ENCODE measurements at regions of chr19 and their contacts with region 1.

Region 1: DNA sequence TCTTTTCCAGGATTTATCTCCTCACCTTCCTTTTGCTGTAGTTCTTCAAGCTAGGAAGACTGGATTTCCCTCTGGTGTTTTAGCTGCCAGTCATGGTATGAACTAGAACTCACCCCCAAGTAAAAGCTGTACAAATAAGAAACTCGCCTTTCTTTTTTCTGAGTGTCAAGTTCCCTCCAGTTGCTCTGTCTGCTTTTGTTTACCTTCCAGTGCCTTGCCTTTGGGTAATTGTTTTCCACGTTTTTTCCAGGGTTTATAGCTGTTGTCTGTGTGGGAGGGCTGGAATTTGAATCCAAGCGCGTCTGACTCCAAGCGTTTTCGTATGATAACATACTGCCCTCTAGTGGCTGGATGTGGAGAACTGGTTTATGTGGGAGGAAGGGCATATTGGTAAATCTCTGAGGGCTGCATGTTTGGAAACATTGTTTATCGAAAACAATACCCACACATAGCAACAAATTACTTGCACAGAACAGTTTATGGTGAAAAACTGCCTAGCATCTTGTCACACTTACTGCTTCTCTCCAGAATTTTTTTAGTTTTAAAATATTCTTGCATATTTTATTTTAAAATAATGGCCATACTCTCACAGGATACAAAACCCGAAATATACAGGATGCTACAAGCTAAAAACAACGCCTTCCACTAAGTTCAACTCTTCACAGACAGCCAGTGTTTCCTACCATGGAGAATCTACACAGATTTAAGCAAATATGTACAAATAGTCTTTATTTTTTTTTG is 19.2 kb downstream of the RCN3 start:
- H3K4me3 Mint-ChIP-seq: no peak overlapping the region
- H3K27ac Mint-ChIP-seq: no peak overlapping the region
- H3K4me1 Mint-ChIP-seq: peaks cover 36% of the 10 kb centered on the region
- H3K27me3 Mint-ChIP-seq: peaks cover 1% of the 10 kb centered on the region

Region 2: DNA sequence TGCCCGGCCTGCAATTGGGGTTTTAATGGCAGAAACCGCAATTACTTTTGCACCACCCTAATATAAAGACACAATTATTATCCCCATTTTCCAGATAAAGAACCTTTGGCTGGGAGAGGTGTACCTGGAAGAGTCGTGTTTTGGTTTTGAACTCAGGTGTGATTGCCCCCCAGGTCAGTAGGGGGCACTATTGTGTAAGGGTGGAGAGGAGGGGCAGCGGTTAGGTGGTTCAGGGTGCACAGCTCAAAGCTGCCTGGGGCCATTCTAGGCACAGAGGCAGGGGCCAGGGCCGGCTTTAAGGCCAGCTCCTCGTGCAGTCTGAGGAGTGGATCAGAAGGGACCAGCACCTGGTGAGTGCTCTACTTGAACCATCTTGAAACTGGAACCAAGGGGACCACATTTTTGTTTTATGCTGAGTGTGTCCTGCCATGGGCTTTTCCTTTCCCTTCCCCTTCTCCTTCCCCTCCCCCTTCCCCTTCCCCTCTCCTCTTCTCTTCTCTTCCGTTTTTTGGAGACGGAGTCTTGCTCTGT is 40.4 kb before region 1 on chr19:
- intact Hi-C with region 1: loop called (anchors 1 kb)
- H3K4me3 Mint-ChIP-seq: no peak overlapping the region
- H3K27ac Mint-ChIP-seq: peak overlapping the region; percentile 73
- H3K4me1 Mint-ChIP-seq: peaks cover 47% of the 10 kb centered on the region
- H3K27me3 Mint-ChIP-seq: peaks cover 2% of the 10 kb centered on the region

Region 3: DNA sequence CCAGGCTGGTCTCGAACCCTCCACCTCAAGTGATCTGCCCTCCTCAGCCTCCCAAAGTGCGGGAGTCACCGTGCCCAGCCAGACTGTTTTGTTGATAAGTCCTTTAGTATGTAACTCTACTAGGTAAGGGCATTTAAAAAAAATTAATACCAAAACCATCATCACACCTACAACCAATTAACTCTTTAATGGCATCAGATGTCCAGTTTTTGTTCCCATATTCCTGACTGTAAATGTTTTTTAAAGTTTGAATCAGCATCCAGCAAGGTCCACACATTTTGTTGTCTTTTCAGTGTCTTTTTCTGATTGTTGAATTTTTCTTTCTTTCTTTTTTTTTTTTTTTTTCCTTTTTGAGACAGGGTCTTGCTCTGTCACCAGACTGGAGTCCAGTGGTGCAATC is 29.0 kb before region 1 on chr19:
- intact Hi-C with region 1: no loop called
- H3K4me3 Mint-ChIP-seq: no peak overlapping the region
- H3K27ac Mint-ChIP-seq: peak overlapping the region; percentile 79
- H3K4me1 Mint-ChIP-seq: peaks cover 63% of the 10 kb centered on the region
- H3K27me3 Mint-ChIP-seq: no peaks in the 10 kb centered on the region

Region 4: DNA sequence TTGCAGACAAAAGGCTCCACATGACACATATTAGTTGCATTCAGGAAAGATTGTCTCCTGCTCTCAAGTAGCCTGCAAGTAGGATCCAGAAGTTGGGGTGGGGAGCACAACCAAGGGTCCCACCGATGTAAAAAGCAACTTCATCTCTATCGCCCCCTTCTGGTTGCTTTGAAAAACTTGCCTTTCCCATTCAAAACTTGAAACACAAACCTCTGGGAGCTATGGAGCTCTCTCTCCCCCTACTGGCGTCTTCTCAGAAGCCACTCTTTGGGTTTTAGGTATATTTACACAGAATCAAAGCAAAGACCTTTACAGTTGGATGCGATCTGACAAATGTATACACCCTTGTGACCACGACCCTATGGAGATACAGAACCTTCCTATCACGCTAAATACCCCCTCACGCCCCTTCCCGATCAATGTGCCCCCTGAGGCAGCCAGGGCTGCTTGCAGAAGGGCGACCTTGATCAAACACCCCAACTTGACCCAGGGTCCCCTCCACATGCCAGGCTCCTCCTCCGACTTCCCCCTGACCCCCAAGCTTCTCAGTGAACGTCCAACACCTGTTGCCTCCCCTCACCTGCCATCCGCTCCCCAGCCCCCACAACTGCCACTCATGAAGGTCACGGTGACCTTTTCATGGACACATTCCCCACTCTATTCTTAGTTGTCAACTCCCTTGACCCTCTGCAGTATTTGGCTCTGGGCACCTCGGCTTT is 23.3 kb after region 1 on chr19:
- intact Hi-C with region 1: no loop called
- H3K4me3 Mint-ChIP-seq: no peak overlapping the region
- H3K27ac Mint-ChIP-seq: peak overlapping the region; percentile 28
- H3K4me1 Mint-ChIP-seq: peaks cover 37% of the 10 kb centered on the region
- H3K27me3 Mint-ChIP-seq: no peaks in the 10 kb centered on the region